K562 (cell line): ENCODE measurements at regions of chr10 and their contacts with region 1.

Region 1: GRCh38 chr10:128859738-128860386 is 607.2 kb upstream of the MGMT start:
- DNase-seq: peak; percentile 33 to 55 (median 44)
- ATAC-seq: peak; percentile 70
- H3K4me3 ChIP-seq: no peak overlapping the region
- H3K27ac ChIP-seq: no peak overlapping the region
- H3K4me1 ChIP-seq: no peaks in the 10 kb centered on the region
- H3K27me3 ChIP-seq: peaks cover 0 to 16% of the 10 kb centered on the region in 2 experiments; a peak in 3 of 5 replicates
- CTCF ChIP-seq: peak; percentile 45 to 63 (median 55); a peak in 4 of 6 replicates
- EP300 ChIP-seq: no peak
- POLR2A ChIP-seq: no peak
- RAD21 ChIP-seq: peak; percentile 30 to 65; a peak in 3 of 4 replicates

Region 2: GRCh38 chr10:128263891-128264688 is 595.8 kb before region 1 on chr10:
- CTCF ChIA-PET with region 1: interaction called, 4 read pairs
- POLR2A ChIA-PET with region 1: interaction called, 4 read pairs
- in situ Hi-C with region 1: loop called (anchors 25 kb)
- intact Hi-C with region 1: loop called (anchors 5 kb)
- DNase-seq: peak; percentile 17 to 50 (median 29)
- ATAC-seq: peak; percentile 88
- H3K4me3 ChIP-seq: no peak overlapping the region
- H3K27ac ChIP-seq: no peak overlapping the region
- H3K4me1 ChIP-seq: no peaks in the 10 kb centered on the region
- H3K27me3 ChIP-seq: peaks cover 0 to 14% of the 10 kb centered on the region in 2 experiments; a peak in 2 of 5 replicates
- CTCF ChIP-seq: peak; percentile 42 to 60 (median 54)
- EP300 ChIP-seq: no peak
- POLR2A ChIP-seq: no peak
- RAD21 ChIP-seq: peak; percentile 12 to 45; a peak in 3 of 4 replicates

Region 3: GRCh38 chr10:128324077-128324827 is 535.6 kb before region 1 on chr10:
- CTCF ChIA-PET with region 1: no interaction called
- POLR2A ChIA-PET with region 1: no interaction called
- in situ Hi-C with region 1: no loop called
- intact Hi-C with region 1: loop called (anchors 5 kb)
- DNase-seq: peak; percentile 24 to 67 (median 42)
- ATAC-seq: peak; percentile 100
- H3K4me3 ChIP-seq: no peak overlapping the region
- H3K27ac ChIP-seq: no peak overlapping the region
- H3K4me1 ChIP-seq: no peaks in the 10 kb centered on the region
- H3K27me3 ChIP-seq: peaks cover 0 to 21% of the 10 kb centered on the region in 2 experiments; a peak in 3 of 5 replicates
- CTCF ChIP-seq: peak; percentile 46 to 62 (median 52); a peak in 5 of 6 replicates
- EP300 ChIP-seq: no peak
- POLR2A ChIP-seq: no peak
- RAD21 ChIP-seq: peak in 1 of 2 experiments; percentile 52; a peak in 2 of 4 replicates

Region 4: DNA sequence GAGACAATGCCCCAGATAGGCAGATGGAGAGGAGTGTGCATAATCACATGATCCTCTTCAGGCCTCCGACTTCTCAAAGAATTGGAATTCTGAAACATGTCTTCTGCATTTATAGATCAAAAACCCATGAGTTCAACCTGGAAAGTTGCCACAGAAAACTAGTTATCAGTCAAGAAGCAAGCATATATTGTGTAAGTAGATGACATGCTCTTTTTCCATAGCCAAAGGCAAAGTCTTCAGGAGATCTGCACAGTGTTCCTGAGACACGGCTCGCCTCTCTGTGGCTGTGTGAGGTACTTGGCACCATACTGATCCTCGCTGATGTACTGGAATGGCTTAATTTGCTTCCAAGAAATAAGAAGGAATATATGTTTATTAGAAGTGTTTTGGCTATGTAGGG is 520.1 kb before region 1 on chr10:
- CTCF ChIA-PET with region 1: no interaction called
- POLR2A ChIA-PET with region 1: no interaction called
- in situ Hi-C with region 1: no loop called
- intact Hi-C with region 1: no loop called
- DNase-seq: no peak
- ATAC-seq: no peak
- H3K4me3 ChIP-seq: no peak overlapping the region
- H3K27ac ChIP-seq: no peak overlapping the region
- H3K4me1 ChIP-seq: no peaks in the 10 kb centered on the region
- H3K27me3 ChIP-seq: peaks cover 0 to 6% of the 10 kb centered on the region in 2 experiments; a peak in 2 of 5 replicates
- CTCF ChIP-seq: no peak
- EP300 ChIP-seq: no peak
- POLR2A ChIP-seq: no peak
- RAD21 ChIP-seq: no peak

Region 5: DNA sequence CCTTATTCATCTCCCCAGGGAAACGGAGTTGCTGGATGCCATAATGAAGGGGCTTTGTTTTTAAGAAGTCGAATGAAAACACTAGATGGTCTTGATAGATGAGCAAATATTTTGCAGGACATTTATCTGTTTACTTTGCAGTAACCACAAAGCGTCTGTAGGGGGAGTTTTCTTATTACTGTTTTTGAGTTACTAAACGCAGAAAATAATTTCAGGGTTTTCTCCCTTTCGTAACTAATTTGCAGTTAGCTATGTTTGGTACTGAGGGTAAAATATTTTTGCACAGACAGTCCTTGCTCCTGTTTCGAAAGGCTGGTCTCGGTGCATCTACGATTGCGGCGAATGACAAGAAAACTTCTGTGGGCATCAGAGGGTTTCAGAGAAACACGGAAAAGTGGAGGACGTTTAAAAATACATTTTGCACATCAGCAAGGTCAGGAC is 228.0 kb before region 1 on chr10:
- CTCF ChIA-PET with region 1: no interaction called
- POLR2A ChIA-PET with region 1: no interaction called
- in situ Hi-C with region 1: no loop called
- intact Hi-C with region 1: loop called (anchors 5 kb)
- DNase-seq: peak in 2 of 4 experiments; percentile 14 to 30
- ATAC-seq: no peak
- H3K4me3 ChIP-seq: no peak overlapping the region
- H3K27ac ChIP-seq: no peak overlapping the region
- H3K4me1 ChIP-seq: peaks cover 10 to 12% of the 10 kb centered on the region in 2 experiments; a peak in 4 of 5 replicates
- H3K27me3 ChIP-seq: no peaks in the 10 kb centered on the region
- CTCF ChIP-seq: peak; percentile 22 to 46 (median 43); a peak in 4 of 6 replicates
- EP300 ChIP-seq: no peak
- POLR2A ChIP-seq: no peak
- RAD21 ChIP-seq: no peak

Region 6: GRCh38 chr10:128793726-128794655 is 65.9 kb before region 1 on chr10:
- CTCF ChIA-PET with region 1: no interaction called
- POLR2A ChIA-PET with region 1: no interaction called
- in situ Hi-C with region 1: no loop called
- intact Hi-C with region 1: no loop called
- DNase-seq: no peak
- ATAC-seq: no peak
- H3K4me3 ChIP-seq: no peak overlapping the region
- H3K27ac ChIP-seq: no peak overlapping the region
- H3K4me1 ChIP-seq: no peaks in the 10 kb centered on the region
- H3K27me3 ChIP-seq: peaks cover 0 to 9% of the 10 kb centered on the region in 2 experiments; a peak in 1 of 5 replicates
- CTCF ChIP-seq: no peak
- EP300 ChIP-seq: no peak
- POLR2A ChIP-seq: no peak
- RAD21 ChIP-seq: no peak